Brain microvascular endothelial cell (primary cell): ENCODE measurements at regions of chr10 and their contacts with region 1.

Region 1: DNA sequence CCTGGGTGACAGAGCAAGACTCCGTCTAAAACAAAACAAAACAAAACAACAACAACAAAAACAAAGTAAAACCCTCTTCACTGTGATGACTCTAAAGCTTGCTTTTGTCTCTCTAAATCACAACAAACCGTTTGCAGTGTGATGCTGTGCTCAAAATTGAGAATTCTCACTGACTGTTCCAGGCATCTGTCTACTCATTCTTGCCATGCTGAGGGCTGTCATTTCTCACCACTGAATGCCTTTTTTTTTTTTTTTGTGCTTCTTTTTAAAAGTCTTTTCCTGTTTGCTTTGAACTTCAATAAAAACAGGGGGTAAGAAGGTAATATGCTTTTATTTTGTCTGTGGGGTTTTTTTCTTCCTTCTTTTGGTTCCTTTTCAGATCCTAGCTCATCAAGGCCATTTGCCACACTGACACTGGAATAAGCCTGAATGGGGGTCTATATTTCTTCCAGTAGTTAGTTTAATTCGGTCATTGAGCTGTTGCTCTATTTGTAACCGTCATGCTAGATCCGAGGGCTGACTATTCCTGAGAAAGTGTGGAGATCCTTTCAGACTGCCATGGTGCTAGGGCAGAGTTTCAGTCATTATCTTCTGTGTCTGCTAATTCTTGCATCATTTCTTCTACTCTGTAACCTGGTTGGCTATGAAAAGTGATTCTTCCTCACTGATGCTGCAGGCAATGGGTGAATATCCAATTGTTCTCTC is 10.6 kb downstream of the FAS start:
- DNase-seq: no peak
- H3K4me3 ChIP-seq: no peak overlapping the region
- H3K27ac ChIP-seq: no peak overlapping the region
- H3K27me3 ChIP-seq: no peaks in the 10 kb centered on the region
- CTCF ChIP-seq: no peak

Region 2: DNA sequence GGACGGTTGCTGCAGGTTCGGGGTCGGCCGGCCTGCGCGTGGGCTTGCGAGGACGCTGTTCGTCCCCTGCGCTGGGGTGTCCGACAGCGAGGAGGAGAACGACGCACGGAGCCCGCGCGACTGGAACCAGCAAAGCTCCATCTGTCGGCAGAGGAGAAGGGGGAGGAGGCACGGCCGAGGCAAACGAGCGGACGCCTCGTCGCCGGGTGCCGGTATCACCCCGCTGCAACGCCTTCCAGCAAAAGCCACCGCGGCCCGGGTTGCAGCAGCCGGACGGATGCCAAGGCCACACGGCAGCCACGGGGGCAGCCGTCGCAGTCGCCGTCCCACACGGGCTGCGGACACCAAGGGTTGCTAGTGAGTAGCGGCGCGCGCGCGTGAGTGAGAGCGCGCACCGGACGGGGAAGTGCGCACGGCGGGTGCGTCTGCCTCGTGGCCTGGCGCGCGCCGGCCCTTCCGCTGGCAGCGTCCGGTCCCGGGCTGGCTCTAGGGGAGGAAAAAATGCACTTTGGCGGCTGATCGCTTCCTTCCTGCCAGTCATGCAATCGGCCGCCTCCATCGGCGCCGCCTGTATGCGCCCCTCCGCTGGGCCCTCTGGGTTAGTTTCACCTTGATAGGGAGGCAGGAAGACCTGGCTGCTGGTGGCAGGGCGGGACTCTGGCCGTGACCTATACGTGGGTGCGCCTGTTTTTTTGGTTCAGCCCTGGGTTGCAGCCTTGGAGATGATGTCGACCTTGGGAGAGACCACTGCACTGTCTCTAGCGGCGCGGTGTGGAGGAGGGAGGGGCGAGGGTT is 120.7 kb before region 1 on chr10:
- in situ Hi-C with region 1: no loop called
- DNase-seq: peak; percentile 62
- H3K4me3 ChIP-seq: peak overlapping the region; percentile 86
- H3K27ac ChIP-seq: peak overlapping the region; percentile 63
- H3K27me3 ChIP-seq: no peaks in the 10 kb centered on the region
- CTCF ChIP-seq: peak; percentile 48

Region 3: GRCh38 chr10:89217057-89217990 is 216.1 kb after region 1 on chr10:
- in situ Hi-C with region 1: loop called (anchors 25 kb)
- DNase-seq: peak; percentile 68
- H3K4me3 ChIP-seq: no peak overlapping the region
- H3K27ac ChIP-seq: no peak overlapping the region
- H3K27me3 ChIP-seq: no peaks in the 10 kb centered on the region
- CTCF ChIP-seq: peak; percentile 66

Region 4: GRCh38 chr10:90138844-90139243 is 1137.7 kb after region 1 on chr10:
- in situ Hi-C with region 1: no loop called
- DNase-seq: peak; percentile 8
- H3K4me3 ChIP-seq: no peak overlapping the region
- H3K27ac ChIP-seq: no peak overlapping the region
- H3K27me3 ChIP-seq: no peaks in the 10 kb centered on the region
- CTCF ChIP-seq: peak; percentile 53